PC-3 (cell line): ENCODE measurements at regions of chr5 and their contacts with region 1.

Region 1: DNA sequence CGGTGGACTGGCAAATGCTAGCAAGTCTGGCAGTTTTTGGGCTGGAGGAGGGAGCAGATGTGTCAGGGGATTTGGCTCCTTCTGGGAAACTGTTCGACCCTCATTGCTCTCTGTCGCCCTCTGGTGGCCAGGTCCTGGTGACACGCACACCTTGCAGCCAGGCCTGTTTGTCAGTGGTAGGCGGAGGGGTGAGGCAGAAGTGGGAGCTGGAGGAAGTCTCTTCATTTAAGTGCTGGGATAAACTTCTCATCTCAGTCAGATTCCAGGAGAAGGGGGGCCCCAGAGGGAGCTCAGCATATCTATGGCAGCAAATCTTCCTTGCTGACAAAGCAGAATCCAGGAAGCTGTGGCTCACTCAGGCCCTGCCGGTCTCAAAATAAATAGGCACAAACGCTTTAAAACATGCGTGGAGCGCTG is 326.5 kb downstream of the ZSWIM6 start:
- DNase-seq: peak; percentile 76
- ATAC-seq: peak; percentile 81
- H3K4me3 ChIP-seq: no peak overlapping the region
- H3K27ac ChIP-seq: no peak overlapping the region
- H3K4me1 ChIP-seq: no peaks in the 10 kb centered on the region
- H3K27me3 ChIP-seq: no peaks in the 10 kb centered on the region
- CTCF ChIP-seq: peak; percentile 81

Region 2: DNA sequence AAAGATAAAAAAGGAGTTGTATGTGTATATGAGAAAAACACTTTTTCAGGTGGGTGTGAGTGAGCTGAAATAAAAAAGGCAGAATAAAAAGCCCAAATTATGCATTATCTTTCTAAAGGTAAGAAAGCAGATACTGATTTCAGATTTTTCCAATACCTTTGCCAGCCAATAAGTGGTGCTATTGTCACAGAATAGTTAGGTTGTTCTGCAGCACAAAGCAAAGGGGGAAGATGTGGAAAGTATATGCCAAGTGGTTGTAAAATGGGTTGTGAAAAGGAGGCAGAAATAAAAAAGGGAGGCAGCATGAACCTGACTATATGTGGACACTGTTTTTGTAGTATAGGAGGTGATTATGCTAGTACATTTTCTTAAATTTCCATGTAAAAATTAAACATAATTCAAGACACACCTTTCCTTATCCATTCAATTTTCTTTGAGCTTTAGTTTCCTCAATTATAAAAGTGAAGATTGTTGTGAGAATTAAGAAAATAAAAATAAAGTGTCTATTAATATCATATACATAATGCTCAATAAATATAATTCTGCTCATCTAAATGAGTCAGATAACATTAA is 603.1 kb before region 1 on chr5:
- CTCF ChIA-PET with region 1: no interaction called
- POLR2A ChIA-PET with region 1: no interaction called
- intact Hi-C with region 1: loop called (anchors 10 kb)
- DNase-seq: peak; percentile 53
- ATAC-seq: peak; percentile 29; the same call in 1 of the 2 replicates
- H3K4me3 ChIP-seq: no peak overlapping the region
- H3K27ac ChIP-seq: no peak overlapping the region
- H3K4me1 ChIP-seq: peaks cover 36% of the 10 kb centered on the region
- H3K27me3 ChIP-seq: no peaks in the 10 kb centered on the region
- CTCF ChIP-seq: peak; percentile 73

Region 3: GRCh38 chr5:61167382-61167781 is 491.2 kb before region 1 on chr5:
- CTCF ChIA-PET with region 1: no interaction called
- POLR2A ChIA-PET with region 1: no interaction called
- intact Hi-C with region 1: loop called (anchors 5 kb)
- DNase-seq: peak; percentile 34
- ATAC-seq: no peak
- H3K4me3 ChIP-seq: no peak overlapping the region
- H3K27ac ChIP-seq: no peak overlapping the region
- H3K4me1 ChIP-seq: peaks cover 14% of the 10 kb centered on the region
- H3K27me3 ChIP-seq: no peaks in the 10 kb centered on the region
- CTCF ChIP-seq: peak; percentile 58

Region 4: GRCh38 chr5:61817472-61818326 is 159.1 kb after region 1 on chr5:
- CTCF ChIA-PET with region 1: no interaction called
- POLR2A ChIA-PET with region 1: no interaction called
- intact Hi-C with region 1: loop called (anchors 2 kb)
- DNase-seq: peak; percentile 45
- ATAC-seq: peak; percentile 72
- H3K4me3 ChIP-seq: no peak overlapping the region
- H3K27ac ChIP-seq: no peak overlapping the region
- H3K4me1 ChIP-seq: peaks cover 28% of the 10 kb centered on the region
- H3K27me3 ChIP-seq: no peaks in the 10 kb centered on the region
- CTCF ChIP-seq: peak; percentile 64